Activated T-helper 2 cell treated with anti-CD3 and anti-CD28 coated beads, Interferon-gamma antibody, Interleukin-2, Interleukin-4, amounts not matched to agents 10 μg/mL and 5 μg/mL and 100 μg/mL, durations not matched to agents 14 hours and 24 hours and 36 hours (primary cell): ENCODE measurements at regions of chr3 and their contacts with region 1.

Region 1: GRCh38 chr3:39267631-39268548 is 11.9 kb downstream of the CX3CR1 start:
- DNase-seq: peak; percentile 74
- H3K4me3 Mint-ChIP-seq: peak overlapping the region; percentile 37
- H3K27ac Mint-ChIP-seq: peak overlapping the region; percentile 97
- H3K4me1 Mint-ChIP-seq: peaks cover 52% of the 10 kb centered on the region
- H3K27me3 Mint-ChIP-seq: no peaks in the 10 kb centered on the region

Region 2: GRCh38 chr3:39189959-39190269 is 78.0 kb before region 1 on chr3:
- intact Hi-C with region 1: loop called (anchors 5 kb)
- DNase-seq: peak; percentile 54
- H3K4me3 Mint-ChIP-seq: no peak overlapping the region
- H3K27ac Mint-ChIP-seq: no peak overlapping the region
- H3K4me1 Mint-ChIP-seq: peaks cover 24% of the 10 kb centered on the region
- H3K27me3 Mint-ChIP-seq: no peaks in the 10 kb centered on the region

Region 3: GRCh38 chr3:39255503-39256325 is 12.2 kb before region 1 on chr3:
- intact Hi-C with region 1: loop called (anchors 1 kb)
- DNase-seq: no peak
- H3K4me3 Mint-ChIP-seq: no peak overlapping the region
- H3K27ac Mint-ChIP-seq: peak overlapping the region; percentile 79
- H3K4me1 Mint-ChIP-seq: peaks cover 55% of the 10 kb centered on the region
- H3K27me3 Mint-ChIP-seq: no peaks in the 10 kb centered on the region

Region 4: GRCh38 chr3:39361252-39361927 is 93.5 kb after region 1 on chr3:
- intact Hi-C with region 1: loop called (anchors 1 kb)
- DNase-seq: peak; percentile 75
- H3K4me3 Mint-ChIP-seq: peak overlapping the region; percentile 77
- H3K27ac Mint-ChIP-seq: peak overlapping the region; percentile 88
- H3K4me1 Mint-ChIP-seq: peaks cover 73% of the 10 kb centered on the region
- H3K27me3 Mint-ChIP-seq: no peaks in the 10 kb centered on the region